MCF 10A (cell line): ENCODE measurements at regions of chr2 and their contacts with region 1.

Region 1: DNA sequence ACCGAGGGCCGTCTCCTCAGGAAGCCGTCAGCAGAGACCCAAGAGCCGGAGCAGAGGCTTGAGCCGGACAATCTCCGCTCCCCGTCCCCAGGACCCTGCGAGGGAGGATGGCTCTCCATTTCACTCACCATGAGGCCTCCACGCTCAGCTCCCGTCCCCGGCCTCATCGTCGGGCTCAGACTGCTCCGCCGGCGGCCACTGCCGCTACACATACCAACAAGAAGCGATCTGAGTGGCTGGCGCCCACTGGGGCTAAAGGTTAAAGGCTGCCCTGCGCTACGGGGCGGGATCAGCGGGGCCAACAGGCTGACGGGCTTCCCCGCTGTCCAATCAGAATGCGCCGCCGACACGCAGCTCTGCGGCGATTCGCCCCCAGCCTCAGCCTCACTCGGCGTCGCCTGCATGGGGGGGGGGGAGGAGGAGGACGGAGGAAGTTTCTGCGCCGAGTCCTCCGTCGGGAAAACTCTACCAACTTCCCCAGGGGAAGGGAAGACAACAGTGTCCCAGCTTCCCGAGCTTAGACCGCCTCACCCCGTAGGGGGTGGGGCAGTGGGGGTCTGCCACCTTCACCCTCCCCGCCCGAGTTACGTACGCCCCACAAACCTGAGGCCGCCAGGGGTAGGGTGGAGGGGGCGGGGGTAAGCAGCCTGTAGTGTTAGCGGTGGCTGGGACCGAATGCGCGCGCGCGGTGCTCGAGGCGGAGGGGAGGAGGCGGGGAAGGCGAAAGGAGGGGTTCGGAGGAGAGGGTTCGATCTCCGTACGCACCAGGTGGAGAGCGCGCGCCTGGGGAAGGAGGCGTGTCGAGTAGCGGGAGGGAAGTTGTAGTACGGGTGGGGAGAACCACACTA is at the start of gene PRPF40A:
- DNase-seq: peak; percentile 98
- H3K4me3 Mint-ChIP-seq: peak within 1 kb of the TSS; percentile 99
- H3K27ac Mint-ChIP-seq: peak within 1 kb of the TSS; percentile 99
- H3K4me1 Mint-ChIP-seq: peaks cover 10% of the 10 kb centered on the region
- H3K27me3 Mint-ChIP-seq: no peaks in the 10 kb centered on the region
- CTCF ChIP-seq: no peak
- total RNA-seq, gene PRPF40A: 140 and 147 TPM in 2 replicates

Region 2: DNA sequence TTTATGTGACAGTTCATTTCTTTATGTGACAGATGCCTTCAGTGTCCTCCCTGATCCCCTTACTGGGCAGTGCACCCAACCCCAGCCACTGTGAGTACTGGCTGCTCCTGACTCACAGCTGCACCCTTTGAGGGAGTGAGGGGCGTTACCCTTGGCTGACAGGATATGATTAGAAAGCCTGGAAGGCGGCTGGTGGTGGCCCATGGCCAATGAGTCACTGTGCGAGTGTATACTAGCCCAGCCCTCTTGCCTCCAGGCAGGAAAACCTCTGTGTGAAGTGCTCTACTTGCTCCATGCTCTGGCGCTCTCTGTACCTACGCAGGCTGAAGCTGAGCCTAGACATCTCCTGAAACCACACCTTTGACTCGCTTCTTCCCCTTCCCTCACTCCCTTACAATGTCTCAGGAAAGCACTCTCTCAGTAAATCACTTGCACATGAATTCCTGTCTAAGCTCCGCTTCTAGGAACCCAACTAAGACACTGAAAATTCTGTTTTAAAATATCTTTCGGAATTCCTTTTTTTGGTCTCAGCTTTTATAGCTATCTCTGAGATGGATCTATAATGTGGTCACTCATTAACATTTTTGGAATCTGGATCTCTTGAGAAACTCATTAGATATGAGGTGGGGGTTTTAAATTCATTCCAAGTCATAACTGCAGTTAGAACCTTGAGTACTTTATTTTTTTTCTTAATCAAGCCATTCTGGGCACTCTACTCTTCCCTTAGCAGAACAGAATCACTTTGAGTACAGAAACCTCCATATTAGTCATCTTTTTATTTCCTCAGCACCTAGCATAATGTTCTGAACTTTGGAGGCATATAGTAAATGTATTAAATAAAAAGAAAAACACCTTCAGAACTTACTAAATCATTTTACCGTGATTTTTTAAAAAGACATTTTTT is 516.6 kb before region 1 on chr2:
- CTCF ChIA-PET with region 1: no interaction called
- POLR2A ChIA-PET with region 1: interaction called, 3 read pairs
- intact Hi-C with region 1: loop called (anchors 2 kb)
- DNase-seq: peak; percentile 100
- H3K4me3 Mint-ChIP-seq: peak overlapping the region; percentile 53
- H3K27ac Mint-ChIP-seq: peak overlapping the region; percentile 74
- H3K4me1 Mint-ChIP-seq: peaks cover 26% of the 10 kb centered on the region
- H3K27me3 Mint-ChIP-seq: no peaks in the 10 kb centered on the region
- CTCF ChIP-seq: no peak

Region 3: GRCh38 chr2:152648336-152648735 is 69.1 kb before region 1 on chr2:
- CTCF ChIA-PET with region 1: no interaction called
- POLR2A ChIA-PET with region 1: interaction called, 19 read pairs
- intact Hi-C with region 1: no loop called
- DNase-seq: no peak
- H3K4me3 Mint-ChIP-seq: no peak overlapping the region
- H3K27ac Mint-ChIP-seq: no peak overlapping the region
- H3K4me1 Mint-ChIP-seq: peaks cover 6% of the 10 kb centered on the region
- H3K27me3 Mint-ChIP-seq: no peaks in the 10 kb centered on the region
- CTCF ChIP-seq: peak; percentile 20

Region 4: GRCh38 chr2:152694161-152694661 is 23.2 kb before region 1 on chr2:
- CTCF ChIA-PET with region 1: interaction called, 10 read pairs
- POLR2A ChIA-PET with region 1: interaction called, 40 read pairs
- intact Hi-C with region 1: no loop called
- DNase-seq: peak; percentile 17
- H3K4me3 Mint-ChIP-seq: peak overlapping the region; percentile 61
- H3K27ac Mint-ChIP-seq: peak overlapping the region; percentile 83
- H3K4me1 Mint-ChIP-seq: peaks cover 12% of the 10 kb centered on the region
- H3K27me3 Mint-ChIP-seq: no peaks in the 10 kb centered on the region
- CTCF ChIP-seq: no peak

Region 5: GRCh38 chr2:152701198-152701597 is 16.3 kb before region 1 on chr2:
- CTCF ChIA-PET with region 1: interaction called, 38 read pairs
- POLR2A ChIA-PET with region 1: interaction called, 40 read pairs
- intact Hi-C with region 1: no loop called
- DNase-seq: no peak
- H3K4me3 Mint-ChIP-seq: no peak overlapping the region
- H3K27ac Mint-ChIP-seq: peak overlapping the region; percentile 28
- H3K4me1 Mint-ChIP-seq: peaks cover 10% of the 10 kb centered on the region
- H3K27me3 Mint-ChIP-seq: no peaks in the 10 kb centered on the region
- CTCF ChIP-seq: no peak

Region 6: GRCh38 chr2:152730591-152731303 is 13.3 kb after region 1 on chr2:
- CTCF ChIA-PET with region 1: interaction called, 9 read pairs
- POLR2A ChIA-PET with region 1: interaction called, 23 read pairs
- intact Hi-C with region 1: no loop called
- DNase-seq: peak; percentile 21
- H3K4me3 Mint-ChIP-seq: no peak overlapping the region
- H3K27ac Mint-ChIP-seq: no peak overlapping the region
- H3K4me1 Mint-ChIP-seq: peaks cover 10% of the 10 kb centered on the region
- H3K27me3 Mint-ChIP-seq: no peaks in the 10 kb centered on the region
- CTCF ChIP-seq: no peak

Region 7: GRCh38 chr2:152740743-152741328 is 23.4 kb after region 1 on chr2:
- CTCF ChIA-PET with region 1: interaction called, 17 read pairs
- POLR2A ChIA-PET with region 1: interaction called, 11 read pairs
- intact Hi-C with region 1: no loop called
- DNase-seq: peak; percentile 63
- H3K4me3 Mint-ChIP-seq: no peak overlapping the region
- H3K27ac Mint-ChIP-seq: no peak overlapping the region
- H3K4me1 Mint-ChIP-seq: no peaks in the 10 kb centered on the region
- H3K27me3 Mint-ChIP-seq: no peaks in the 10 kb centered on the region
- CTCF ChIP-seq: peak; percentile 81